Left cardiac atrium (tissue), 4 donors: ENCODE measurements at regions of chr5 and their contacts with region 1.

Region 1: GRCh38 chr5:141811287-141812155 is 66.7 kb downstream of the PCDH1 start:
- DNase-seq: peak; percentile 35
- ATAC-seq: peak in 1 of 2 donors; percentile 24

Region 2: GRCh38 chr5:141701360-141702119 is 110.0 kb before region 1 on chr5:
- intact Hi-C with region 1: loop called in 1 of 2 experiments (anchors 5 kb)
- DNase-seq: no peak
- ATAC-seq: no peak

Region 3: GRCh38 chr5:141986072-141986471 is 174.6 kb after region 1 on chr5:
- intact Hi-C with region 1: no loop called
- DNase-seq: no peak
- ATAC-seq: no peak

Region 4: GRCh38 chr5:142568283-142568995 is 756.9 kb after region 1 on chr5:
- intact Hi-C with region 1: no loop called
- DNase-seq: peak; percentile 51
- ATAC-seq: peak; percentile 59 to 63